Left ventricle myocardium superior (tissue), 1 donor: ENCODE measurements at regions of chr3 and their contacts with region 1.

Region 1: GRCh38 chr3:88480822-88481221 is 331.1 kb downstream of the C3orf38 start:
- DNase-seq: no peak
- ATAC-seq: no peak

Region 2: DNA sequence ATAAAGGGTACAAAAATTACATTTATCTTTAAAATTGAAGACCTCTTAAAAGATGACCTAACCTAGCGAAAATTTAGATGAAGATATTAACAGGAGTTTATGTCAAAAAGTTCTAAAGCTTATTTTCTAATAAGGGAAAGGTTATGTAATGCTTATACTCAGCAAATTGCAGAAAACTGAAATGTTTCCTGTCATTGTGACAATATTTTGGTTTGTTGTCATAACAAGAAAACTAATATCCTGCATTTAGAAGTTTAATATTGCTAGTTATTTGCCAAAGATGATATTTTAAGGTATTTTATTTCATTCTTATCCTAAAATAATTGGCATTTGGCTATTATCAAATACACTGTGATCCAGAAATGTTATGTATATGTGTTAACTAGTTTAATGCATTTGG is 36.6 kb before region 1 on chr3:
- intact Hi-C with region 1: no loop called
- DNase-seq: no peak
- ATAC-seq: no peak

Region 3: DNA sequence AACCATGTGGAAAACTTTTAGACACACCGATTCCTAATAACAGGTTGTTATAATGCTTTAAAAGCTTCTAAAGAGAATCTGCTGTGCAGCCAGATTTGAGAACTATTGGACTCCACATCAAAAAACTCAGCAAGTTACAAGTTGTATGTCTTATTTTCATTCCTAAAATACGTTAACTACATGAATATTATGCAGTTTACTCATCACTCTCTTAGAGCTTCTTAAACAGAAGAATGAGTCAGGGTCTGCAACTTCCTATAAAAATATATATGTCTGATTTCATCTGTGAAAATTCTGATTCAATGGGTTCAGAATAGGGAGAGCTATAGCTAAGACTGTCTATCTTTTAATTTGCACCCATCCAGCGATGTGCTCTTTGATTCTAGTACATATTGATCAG is 382.4 kb after region 1 on chr3:
- intact Hi-C with region 1: loop called (anchors 5 kb)
- DNase-seq: no peak
- ATAC-seq: no peak